Psoas muscle (tissue), 8 donors: ENCODE measurements at regions of chr6 and their contacts with region 1.

Region 1: GRCh38 chr6:53005663-53006250 is 10.7 kb upstream of the GSTA4 start:
- DNase-seq: no peak
- ATAC-seq: no peak
- H3K4me3 ChIP-seq: no peak overlapping the region
- H3K27ac ChIP-seq: no peak overlapping the region
- H3K4me1 ChIP-seq: no peaks in the 10 kb centered on the region
- H3K27me3 ChIP-seq: no peaks in the 10 kb centered on the region
- CTCF ChIP-seq: no peak

Region 2: GRCh38 chr6:52834481-52834880 is 171.3 kb before region 1 on chr6:
- intact Hi-C with region 1: no loop called
- DNase-seq: no peak
- ATAC-seq: no peak
- H3K4me3 ChIP-seq: no peak overlapping the region
- H3K27ac ChIP-seq: no peak overlapping the region
- H3K4me1 ChIP-seq: no peaks in the 10 kb centered on the region
- H3K27me3 ChIP-seq: peaks cover 0 to 3% (median 0%) of the 10 kb centered on the region in 3 donors
- CTCF ChIP-seq: no peak

Region 3: DNA sequence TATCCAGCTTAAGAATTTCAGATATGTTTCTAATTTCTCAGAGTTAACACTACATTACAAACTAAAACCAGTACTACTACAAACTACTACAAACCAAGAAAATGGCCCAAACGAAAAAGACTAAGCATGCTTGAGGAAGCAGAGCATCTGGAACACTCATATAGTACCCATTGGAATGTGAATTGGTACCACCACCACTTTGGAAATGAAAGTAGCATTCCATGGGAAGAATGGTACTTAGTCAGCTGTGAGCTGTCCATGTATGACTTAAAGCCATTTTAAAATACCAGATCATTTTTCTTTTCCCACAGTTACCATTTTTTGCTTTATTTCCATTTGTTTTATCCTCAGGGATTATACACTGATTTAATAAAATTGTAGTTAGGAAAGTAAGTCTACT is 90.0 kb after region 1 on chr6:
- intact Hi-C with region 1: loop called in 1 of 2 experiments (anchors 5 kb)
- DNase-seq: no peak
- ATAC-seq: no peak
- H3K4me3 ChIP-seq: no peak overlapping the region
- H3K27ac ChIP-seq: no peak overlapping the region
- H3K4me1 ChIP-seq: no peaks in the 10 kb centered on the region
- H3K27me3 ChIP-seq: no peaks in the 10 kb centered on the region
- CTCF ChIP-seq: no peak